ENCODE measurements at regions of chr17 and their contacts with region 1.

Region 1: GRCh38 chr17:51153210-51154072 is at the start of gene NME1:
- DNase-seq: peak; percentile 97
- ATAC-seq: peak; percentile 98 to 99
- H3K4me3 ChIP-seq: peak within 1 kb of the TSS; percentile 64 to 77 (median 72)
- H3K27ac ChIP-seq: peak within 1 kb of the TSS; percentile 82 to 90 (median 88)
- H3K4me1 ChIP-seq: peaks cover 17 to 18% of the 10 kb centered on the region in 2 donors
- H3K27me3 ChIP-seq: no peaks in the 10 kb centered on the region
- CTCF ChIP-seq: peak; percentile 70 to 80 (median 78)
- POLR2A ChIP-seq: peak; percentile 34 to 59
- total RNA-seq, gene NME1: 19.1 to 32.6 (median 29.2) TPM

Region 2: GRCh38 chr17:50865984-50866774 is 287.3 kb before region 1 on chr17 and contains the start of gene TOB1:
- in situ Hi-C with region 1: loop called in 2 of 4 experiments (anchors 25 kb)
- intact Hi-C with region 1: loop called (anchors 5 kb)
- DNase-seq: peak; percentile 98 to 99
- ATAC-seq: peak; percentile 68
- H3K4me3 ChIP-seq: peak within 1 kb of the TSS; percentile 67 to 98 (median 84)
- H3K27ac ChIP-seq: peak within 1 kb of the TSS; percentile 98 to 100 (median 99)
- H3K4me1 ChIP-seq: peaks cover 34 to 51% of the 10 kb centered on the region in 2 donors
- H3K27me3 ChIP-seq: no peaks in the 10 kb centered on the region
- CTCF ChIP-seq: no peak
- POLR2A ChIP-seq: peak; percentile 99
- total RNA-seq, gene TOB1: 13.6 to 53.5 (median 28.2) TPM

Region 3: GRCh38 chr17:50963139-50963538 is 190.3 kb before region 1 on chr17:
- in situ Hi-C with region 1: no loop called
- intact Hi-C with region 1: no loop called
- DNase-seq: no peak
- ATAC-seq: no peak
- H3K4me3 ChIP-seq: no peak overlapping the region
- H3K27ac ChIP-seq: no peak overlapping the region
- H3K4me1 ChIP-seq: peaks cover 0 to 12% of the 10 kb centered on the region in 2 donors
- H3K27me3 ChIP-seq: no peaks in the 10 kb centered on the region
- CTCF ChIP-seq: no peak
- POLR2A ChIP-seq: no peak

Region 4: GRCh38 chr17:51006601-51007000 is 146.8 kb before region 1 on chr17:
- in situ Hi-C with region 1: loop called (anchors 5 to 10 kb)
- intact Hi-C with region 1: loop called (anchors 1 kb)
- DNase-seq: no peak
- ATAC-seq: no peak
- H3K4me3 ChIP-seq: no peak overlapping the region
- H3K27ac ChIP-seq: no peak overlapping the region
- H3K4me1 ChIP-seq: no peaks in the 10 kb centered on the region
- H3K27me3 ChIP-seq: no peaks in the 10 kb centered on the region
- CTCF ChIP-seq: no peak
- POLR2A ChIP-seq: no peak

Region 5: DNA sequence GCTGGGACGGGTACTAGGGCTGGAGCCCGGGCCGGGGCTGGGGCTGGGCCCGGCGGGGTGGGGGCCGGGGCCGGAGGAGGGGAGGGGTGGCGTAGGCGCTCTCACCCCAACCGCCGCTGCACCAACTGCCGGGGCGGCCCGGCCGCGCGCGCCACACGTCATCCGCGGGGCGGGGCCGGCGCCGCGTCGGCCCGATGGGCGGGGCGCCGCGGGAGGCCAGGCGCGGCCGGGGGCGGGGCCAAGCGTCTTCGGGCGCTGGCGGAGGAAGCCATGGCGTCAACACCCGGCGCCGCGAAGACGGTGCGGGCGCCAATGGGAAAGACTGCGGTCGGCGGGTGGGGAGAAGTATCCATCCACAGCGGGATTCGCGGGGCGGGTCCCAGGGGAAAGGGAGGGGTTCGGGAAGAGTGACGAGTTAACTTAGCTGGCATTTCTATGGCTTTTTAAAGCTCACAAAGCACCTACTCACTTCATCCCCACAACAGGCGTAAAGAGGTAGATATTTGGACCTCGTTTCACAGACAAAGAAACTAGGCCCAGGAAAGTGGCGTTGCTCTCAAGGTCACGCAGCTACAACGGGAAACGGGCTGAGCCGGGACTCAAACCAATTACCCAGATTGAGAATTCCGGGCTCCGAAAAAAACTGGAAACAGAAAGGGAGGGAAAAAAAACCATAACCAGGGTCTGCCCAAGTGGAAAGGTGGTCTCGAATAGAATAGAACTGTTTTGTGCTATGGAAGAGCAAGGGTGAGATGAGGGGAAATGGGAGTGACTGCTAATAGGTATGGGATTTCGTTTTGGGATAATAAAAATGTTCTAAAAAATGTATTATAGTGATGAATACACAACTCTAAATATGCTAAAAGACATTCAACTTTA is 32.5 kb before region 1 on chr17 and contains the start of gene SPAG9:
- in situ Hi-C with region 1: no loop called
- intact Hi-C with region 1: loop called (anchors 1 kb)
- DNase-seq: peak; percentile 95 to 96
- ATAC-seq: peak; percentile 69 to 72
- H3K4me3 ChIP-seq: peak within 1 kb of the TSS; percentile 81 to 99 (median 89)
- H3K27ac ChIP-seq: peak within 1 kb of the TSS; percentile 99 to 100 (median 100)
- H3K4me1 ChIP-seq: peaks cover 38% of the 10 kb centered on the region in 2 donors
- H3K27me3 ChIP-seq: no peaks in the 10 kb centered on the region
- CTCF ChIP-seq: no peak
- POLR2A ChIP-seq: peak; percentile 79 to 83
- total RNA-seq, gene SPAG9: 139 to 171 (median 143) TPM

Region 6: GRCh38 chr17:51260125-51260880 is 106.9 kb after region 1 on chr17 and contains the start of gene UTP18:
- in situ Hi-C with region 1: no loop called
- intact Hi-C with region 1: loop called (anchors 5 kb)
- DNase-seq: peak; percentile 96 to 97
- ATAC-seq: peak; percentile 95 to 96
- H3K4me3 ChIP-seq: peak within 1 kb of the TSS; percentile 72 to 99 (median 94)
- H3K27ac ChIP-seq: peak within 1 kb of the TSS; percentile 89 to 99 (median 96)
- H3K4me1 ChIP-seq: peaks cover 41 to 44% of the 10 kb centered on the region in 2 donors
- H3K27me3 ChIP-seq: no peaks in the 10 kb centered on the region
- CTCF ChIP-seq: peak in 1 of 5 experiments; percentile 40
- POLR2A ChIP-seq: peak; percentile 64 to 76
- total RNA-seq, gene UTP18: 19.0 to 29.9 (median 21.4) TPM

Region 7: GRCh38 chr17:51305182-51305581 is 151.7 kb after region 1 on chr17:
- in situ Hi-C with region 1: no loop called
- intact Hi-C with region 1: no loop called
- DNase-seq: no peak
- ATAC-seq: no peak
- H3K4me3 ChIP-seq: no peak overlapping the region
- H3K27ac ChIP-seq: no peak overlapping the region
- H3K4me1 ChIP-seq: no peaks in the 10 kb centered on the region
- H3K27me3 ChIP-seq: no peaks in the 10 kb centered on the region
- CTCF ChIP-seq: no peak
- POLR2A ChIP-seq: no peak